Prostate gland (tissue), 2 donors: ENCODE measurements at regions of chr9 and their contacts with region 1.

Region 1: DNA sequence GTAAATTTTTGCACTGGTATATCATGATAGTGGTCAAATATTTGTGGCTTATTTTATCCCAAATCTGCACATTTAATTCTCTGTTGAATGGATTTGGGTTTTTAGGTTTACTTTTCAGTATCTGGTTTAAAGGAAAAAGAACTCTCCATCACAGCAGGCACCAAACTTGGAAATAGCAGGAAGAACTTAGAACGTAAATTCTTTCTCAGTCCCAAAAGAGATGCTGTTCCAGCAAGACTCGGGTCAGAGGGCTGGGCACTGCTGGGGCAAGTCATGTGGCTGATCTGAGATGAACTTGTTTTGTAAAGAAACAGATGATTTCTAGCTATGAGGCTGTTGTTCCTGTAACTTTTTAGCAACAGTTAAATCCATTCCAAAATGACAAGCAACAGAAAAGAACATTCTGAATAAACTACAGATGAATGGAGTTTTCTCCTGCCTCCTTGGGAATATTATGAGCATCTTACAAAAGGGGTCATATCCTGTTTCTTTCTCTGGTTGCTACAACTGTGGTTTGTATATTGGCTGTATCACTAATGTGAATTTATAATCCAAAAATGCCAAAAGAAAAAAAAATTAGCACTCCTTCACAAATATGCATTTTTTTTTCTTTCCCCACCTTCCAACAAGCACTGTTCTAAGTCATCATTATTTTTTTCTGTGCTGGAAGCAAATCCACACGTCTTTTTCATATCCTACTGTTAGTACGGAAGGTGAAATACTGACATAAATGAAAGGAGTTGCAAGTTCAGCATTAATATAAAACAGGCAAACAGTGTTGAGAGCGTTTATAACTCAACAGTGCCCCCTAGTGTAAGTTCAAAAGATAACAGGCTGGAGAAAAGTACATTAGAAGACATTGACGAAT is 31.1 kb downstream of the OR2K2 start:
- DNase-seq: peak; percentile 24
- H3K4me3 ChIP-seq: no peak overlapping the region
- H3K27ac ChIP-seq: peak overlapping the region in 1 of 2 donors; percentile 4
- H3K4me1 ChIP-seq: no peaks in the 10 kb centered on the region
- H3K27me3 ChIP-seq: no peaks in the 10 kb centered on the region
- CTCF ChIP-seq: peak; percentile 79 to 93 (median 92)
- POLR2A ChIP-seq: no peak

Region 2: DNA sequence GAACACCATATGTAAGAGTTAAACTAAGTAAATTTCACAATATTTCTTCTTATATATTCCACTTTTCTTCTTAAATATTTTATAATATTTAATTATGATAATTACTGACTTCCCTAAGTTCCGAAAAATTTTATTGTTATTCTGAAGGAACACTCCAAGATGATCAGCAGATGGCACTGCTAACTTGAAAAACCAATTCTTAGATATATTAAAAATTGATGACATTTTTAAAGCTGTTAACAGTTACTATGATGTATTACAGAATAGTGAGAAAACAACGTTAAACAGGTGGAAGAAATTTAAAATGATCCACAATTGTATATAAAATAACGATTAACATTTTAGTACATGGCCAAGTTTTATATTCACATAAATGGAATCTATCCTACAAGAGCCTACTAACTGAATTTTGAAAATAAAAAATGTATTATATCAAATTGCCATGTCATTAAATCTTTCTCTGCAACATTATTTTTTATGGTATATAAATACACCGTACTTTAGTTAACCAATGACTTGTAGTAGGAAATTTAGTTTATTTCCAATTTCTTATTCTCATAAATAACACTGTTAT is 660.5 kb before region 1 on chr9:
- intact Hi-C with region 1: loop called (anchors 2 kb)
- DNase-seq: no peak
- H3K4me3 ChIP-seq: no peak overlapping the region
- H3K27ac ChIP-seq: no peak overlapping the region
- H3K4me1 ChIP-seq: no peaks in the 10 kb centered on the region
- H3K27me3 ChIP-seq: no peaks in the 10 kb centered on the region
- CTCF ChIP-seq: peak in 3 of 4 experiments; percentile 44 to 67 (median 57)
- POLR2A ChIP-seq: no peak

Region 3: DNA sequence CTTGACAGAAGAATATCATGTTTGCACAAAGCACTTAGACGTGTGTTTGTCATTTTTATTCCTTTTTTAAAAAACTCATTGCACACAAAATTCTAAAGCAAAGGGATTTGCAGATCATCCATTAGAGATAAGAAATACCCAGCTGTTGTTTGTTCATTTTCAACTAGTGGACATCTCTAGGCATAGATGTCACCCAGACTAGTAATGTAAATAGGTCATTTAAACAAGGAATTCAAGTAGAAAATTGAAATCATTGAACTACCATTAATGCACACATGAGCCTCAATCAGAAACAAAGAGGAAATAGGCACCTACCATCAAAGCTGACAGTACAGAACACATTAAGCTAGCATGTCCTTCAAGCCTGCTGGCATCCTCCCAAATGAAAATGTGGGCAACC is 76.2 kb before region 1 on chr9:
- intact Hi-C with region 1: no loop called
- DNase-seq: no peak
- H3K4me3 ChIP-seq: no peak overlapping the region
- H3K27ac ChIP-seq: no peak overlapping the region
- H3K4me1 ChIP-seq: no peaks in the 10 kb centered on the region
- H3K27me3 ChIP-seq: no peaks in the 10 kb centered on the region
- CTCF ChIP-seq: no peak
- POLR2A ChIP-seq: no peak